ENCODE measurements at regions of chr7 and their contacts with region 1.

Region 1: DNA sequence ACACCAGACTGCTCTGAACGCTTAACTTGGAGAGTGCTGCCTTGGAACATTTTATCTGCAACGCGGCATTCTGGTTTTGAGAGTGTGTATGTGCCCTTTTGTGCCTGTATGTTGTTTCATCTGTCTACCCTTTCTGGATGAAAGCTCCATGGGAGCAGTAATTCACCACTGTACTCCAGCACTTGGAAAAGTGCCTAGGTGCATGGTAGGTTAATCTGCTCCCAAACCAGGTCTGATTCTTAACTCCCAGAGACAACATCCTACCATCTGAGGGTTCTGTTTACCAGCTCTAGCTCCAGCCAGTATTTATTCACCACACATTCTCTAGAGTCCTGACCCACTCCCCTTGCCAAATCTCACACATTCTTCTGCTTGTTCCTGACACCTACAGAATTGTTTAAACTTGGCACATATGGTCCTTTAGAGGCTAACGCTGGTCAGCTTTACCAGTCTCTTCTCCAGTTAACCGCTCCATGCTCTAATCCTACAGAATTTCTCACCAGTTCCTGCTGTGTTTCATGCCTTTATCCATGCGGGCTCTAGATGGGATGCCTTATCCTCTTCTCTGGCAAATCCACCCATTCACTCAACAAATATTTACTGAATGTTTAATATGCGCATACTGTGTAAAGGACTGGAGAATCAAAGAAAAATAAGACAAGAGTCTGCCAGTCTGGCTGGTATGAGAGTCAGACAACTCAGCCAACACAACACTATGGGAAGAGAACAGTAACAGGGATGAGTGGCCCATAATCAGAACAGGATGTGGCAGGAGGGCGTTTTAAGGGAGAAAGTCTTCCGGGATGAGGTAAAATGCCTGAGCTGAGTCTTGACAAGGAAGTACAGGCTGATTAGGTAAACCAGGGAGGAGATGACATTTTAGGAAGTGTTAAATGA is 46.3 kb downstream of the MTPN start:
- DNase-seq: no peak
- H3K4me3 ChIP-seq: no peak overlapping the region
- H3K27ac ChIP-seq: peak overlapping the region in 3 of 8 donors; percentile 51 to 71 (median 61)
- H3K4me1 ChIP-seq: peaks cover 3 to 75% (median 38%) of the 10 kb centered on the region in 6 donors
- H3K27me3 ChIP-seq: no peaks in the 10 kb centered on the region
- CTCF ChIP-seq: no peak
- POLR2A ChIP-seq: no peak

Region 2: GRCh38 chr7:134908289-134908688 is 1022.5 kb before region 1 on chr7:
- intact Hi-C with region 1: no loop called
- DNase-seq: no peak
- H3K4me3 ChIP-seq: no peak overlapping the region
- H3K27ac ChIP-seq: peak overlapping the region in 2 of 8 donors; percentile 17 to 50
- H3K4me1 ChIP-seq: peaks cover 0 to 20% (median 0%) of the 10 kb centered on the region in 6 donors
- H3K27me3 ChIP-seq: no peaks in the 10 kb centered on the region
- CTCF ChIP-seq: no peak
- POLR2A ChIP-seq: no peak

Region 3: GRCh38 chr7:135499818-135500217 is 431.0 kb before region 1 on chr7:
- intact Hi-C with region 1: no loop called
- DNase-seq: no peak
- H3K4me3 ChIP-seq: no peak overlapping the region
- H3K27ac ChIP-seq: peak overlapping the region in 1 of 8 donors; percentile 36
- H3K4me1 ChIP-seq: peaks cover 22 to 92% (median 67%) of the 10 kb centered on the region in 6 donors
- H3K27me3 ChIP-seq: no peaks in the 10 kb centered on the region
- CTCF ChIP-seq: no peak
- POLR2A ChIP-seq: no peak

Region 4: GRCh38 chr7:135884495-135885232 is 46.1 kb before region 1 on chr7:
- intact Hi-C with region 1: loop called (anchors 5 kb)
- DNase-seq: no peak
- H3K4me3 ChIP-seq: no peak overlapping the region
- H3K27ac ChIP-seq: no peak overlapping the region
- H3K4me1 ChIP-seq: no peaks in the 10 kb centered on the region
- H3K27me3 ChIP-seq: no peaks in the 10 kb centered on the region
- CTCF ChIP-seq: no peak
- POLR2A ChIP-seq: no peak

Region 5: DNA sequence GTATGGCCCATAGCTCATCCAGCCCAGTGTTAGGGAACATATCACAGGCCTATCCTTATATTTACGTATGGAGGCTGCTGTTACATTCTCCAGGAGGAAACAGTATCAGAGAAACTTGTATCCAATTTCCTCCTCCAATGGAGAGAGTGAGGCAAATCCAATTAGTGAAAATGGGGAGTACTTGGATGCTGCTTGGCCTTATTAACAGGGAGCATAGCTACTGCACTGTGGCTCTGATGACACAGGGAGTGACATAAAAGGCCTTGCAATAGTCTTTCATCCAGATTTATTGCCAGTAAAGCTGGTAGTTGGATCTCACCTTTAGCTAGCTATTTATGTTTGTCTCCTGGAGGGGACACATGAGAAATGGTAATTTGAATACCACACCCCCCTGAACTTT is 359.5 kb after region 1 on chr7:
- intact Hi-C with region 1: no loop called
- DNase-seq: no peak
- H3K4me3 ChIP-seq: no peak overlapping the region
- H3K27ac ChIP-seq: no peak overlapping the region
- H3K4me1 ChIP-seq: no peaks in the 10 kb centered on the region
- H3K27me3 ChIP-seq: no peaks in the 10 kb centered on the region
- CTCF ChIP-seq: no peak
- POLR2A ChIP-seq: no peak

Measured in spleen (tissue), 13 donors.